ENCODE measurements at regions of chr10 and their contacts with region 1.

Region 1: GRCh38 chr10:59906417-59907202 is at the start of gene CCDC6:
- DNase-seq: peak; percentile 87 to 96 (median 94)
- ATAC-seq: peak; percentile 89
- H3K4me3 ChIP-seq: peak within 1 kb of the TSS; percentile 80 to 84
- H3K4me3 Mint-ChIP-seq: peak within 1 kb of the TSS; percentile 95
- H3K27ac ChIP-seq: peak within 1 kb of the TSS; percentile 77 to 80
- H3K27ac Mint-ChIP-seq: peak within 1 kb of the TSS; percentile 97
- H3K4me1 ChIP-seq: peaks cover 41% of the 10 kb centered on the region
- H3K4me1 Mint-ChIP-seq: peaks cover 62% of the 10 kb centered on the region
- H3K27me3 ChIP-seq: no peaks in the 10 kb centered on the region
- H3K27me3 Mint-ChIP-seq: no peaks in the 10 kb centered on the region
- CTCF ChIP-seq: peak; percentile 80
- total RNA-seq, gene CCDC6: 21.6 to 23.7 TPM

Region 2: GRCh38 chr10:59814878-59815277 is 91.7 kb before region 1 on chr10:
- CTCF ChIA-PET with region 1: no interaction called
- POLR2A ChIA-PET with region 1: no interaction called
- intact Hi-C with region 1: loop called in 1 of 2 experiments (anchors 5 kb)
- DNase-seq: no peak
- ATAC-seq: no peak
- H3K4me3 ChIP-seq: no peak overlapping the region
- H3K4me3 Mint-ChIP-seq: no peak overlapping the region
- H3K27ac ChIP-seq: no peak overlapping the region
- H3K27ac Mint-ChIP-seq: no peak overlapping the region
- H3K4me1 ChIP-seq: peaks cover 11% of the 10 kb centered on the region
- H3K4me1 Mint-ChIP-seq: peaks cover 15% of the 10 kb centered on the region
- H3K27me3 ChIP-seq: no peaks in the 10 kb centered on the region
- H3K27me3 Mint-ChIP-seq: no peaks in the 10 kb centered on the region
- CTCF ChIP-seq: no peak

Region 3: GRCh38 chr10:59830601-59831259 is 75.9 kb before region 1 on chr10:
- CTCF ChIA-PET with region 1: interaction called, 3 read pairs
- POLR2A ChIA-PET with region 1: no interaction called
- intact Hi-C with region 1: loop called (anchors 2 to 5 kb)
- DNase-seq: peak in 3 of 9 experiments; percentile 17 to 45 (median 28)
- ATAC-seq: no peak
- H3K4me3 ChIP-seq: no peak overlapping the region
- H3K4me3 Mint-ChIP-seq: no peak overlapping the region
- H3K27ac ChIP-seq: no peak overlapping the region
- H3K27ac Mint-ChIP-seq: no peak overlapping the region
- H3K4me1 ChIP-seq: no peaks in the 10 kb centered on the region
- H3K4me1 Mint-ChIP-seq: peaks cover 49% of the 10 kb centered on the region
- H3K27me3 ChIP-seq: no peaks in the 10 kb centered on the region
- H3K27me3 Mint-ChIP-seq: no peaks in the 10 kb centered on the region
- CTCF ChIP-seq: peak; percentile 50

Region 4: DNA sequence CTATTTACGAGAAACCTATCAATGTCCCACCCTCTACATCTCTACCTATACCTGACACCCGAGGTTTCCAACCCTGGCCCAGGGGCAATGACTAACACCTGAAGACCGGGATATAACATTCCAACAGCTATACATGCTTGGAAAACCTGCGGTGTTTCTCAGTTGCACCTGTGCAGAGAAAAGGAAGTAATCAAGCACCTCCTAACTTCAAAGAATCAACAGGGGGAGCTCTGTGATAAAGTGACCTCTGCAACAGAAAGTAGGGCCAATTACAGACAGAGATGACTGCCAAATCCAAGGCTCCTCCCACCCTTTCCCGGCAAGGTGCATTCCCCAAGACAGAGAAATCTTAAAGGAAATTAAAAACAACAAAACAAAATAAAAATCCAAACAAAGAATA is 41.5 kb before region 1 on chr10:
- CTCF ChIA-PET with region 1: interaction called, 16 read pairs
- POLR2A ChIA-PET with region 1: interaction called, 7 read pairs
- intact Hi-C with region 1: loop called (anchors 1 to 2 kb)
- DNase-seq: peak in 2 of 9 experiments; percentile 44 to 60
- ATAC-seq: peak; percentile 35
- H3K4me3 ChIP-seq: no peak overlapping the region
- H3K4me3 Mint-ChIP-seq: peak overlapping the region; percentile 5
- H3K27ac ChIP-seq: no peak overlapping the region
- H3K27ac Mint-ChIP-seq: peak overlapping the region; percentile 46
- H3K4me1 ChIP-seq: peaks cover 24% of the 10 kb centered on the region
- H3K4me1 Mint-ChIP-seq: peaks cover 63% of the 10 kb centered on the region
- H3K27me3 ChIP-seq: no peaks in the 10 kb centered on the region
- H3K27me3 Mint-ChIP-seq: no peaks in the 10 kb centered on the region
- CTCF ChIP-seq: peak; percentile 24

Region 5: DNA sequence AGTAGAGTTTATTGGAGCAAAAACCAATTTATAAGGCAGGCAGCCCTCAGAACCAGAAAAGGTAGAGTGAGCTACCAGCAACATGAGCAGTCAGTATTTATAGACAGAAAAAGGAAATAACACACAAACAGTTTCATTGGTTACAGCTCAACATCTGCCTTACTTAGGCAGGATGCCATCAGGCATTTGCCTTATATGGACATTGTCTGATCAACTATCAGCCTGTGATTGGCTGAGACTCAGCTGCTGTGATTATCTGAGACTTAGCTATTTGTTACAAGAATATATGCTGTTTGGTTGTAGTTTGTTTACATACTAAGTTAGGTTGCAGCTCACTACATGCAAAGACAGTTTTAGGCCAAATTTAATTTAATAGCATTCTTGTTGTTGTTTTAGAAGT is 811.2 kb after region 1 on chr10:
- CTCF ChIA-PET with region 1: no interaction called
- POLR2A ChIA-PET with region 1: no interaction called
- intact Hi-C with region 1: no loop called
- DNase-seq: no peak
- ATAC-seq: no peak
- H3K4me3 ChIP-seq: no peak overlapping the region
- H3K4me3 Mint-ChIP-seq: no peak overlapping the region
- H3K27ac ChIP-seq: no peak overlapping the region
- H3K27ac Mint-ChIP-seq: no peak overlapping the region
- H3K4me1 ChIP-seq: no peaks in the 10 kb centered on the region
- H3K4me1 Mint-ChIP-seq: peaks cover 9% of the 10 kb centered on the region
- H3K27me3 ChIP-seq: no peaks in the 10 kb centered on the region
- H3K27me3 Mint-ChIP-seq: peaks cover 2% of the 10 kb centered on the region
- CTCF ChIP-seq: no peak

Region 6: DNA sequence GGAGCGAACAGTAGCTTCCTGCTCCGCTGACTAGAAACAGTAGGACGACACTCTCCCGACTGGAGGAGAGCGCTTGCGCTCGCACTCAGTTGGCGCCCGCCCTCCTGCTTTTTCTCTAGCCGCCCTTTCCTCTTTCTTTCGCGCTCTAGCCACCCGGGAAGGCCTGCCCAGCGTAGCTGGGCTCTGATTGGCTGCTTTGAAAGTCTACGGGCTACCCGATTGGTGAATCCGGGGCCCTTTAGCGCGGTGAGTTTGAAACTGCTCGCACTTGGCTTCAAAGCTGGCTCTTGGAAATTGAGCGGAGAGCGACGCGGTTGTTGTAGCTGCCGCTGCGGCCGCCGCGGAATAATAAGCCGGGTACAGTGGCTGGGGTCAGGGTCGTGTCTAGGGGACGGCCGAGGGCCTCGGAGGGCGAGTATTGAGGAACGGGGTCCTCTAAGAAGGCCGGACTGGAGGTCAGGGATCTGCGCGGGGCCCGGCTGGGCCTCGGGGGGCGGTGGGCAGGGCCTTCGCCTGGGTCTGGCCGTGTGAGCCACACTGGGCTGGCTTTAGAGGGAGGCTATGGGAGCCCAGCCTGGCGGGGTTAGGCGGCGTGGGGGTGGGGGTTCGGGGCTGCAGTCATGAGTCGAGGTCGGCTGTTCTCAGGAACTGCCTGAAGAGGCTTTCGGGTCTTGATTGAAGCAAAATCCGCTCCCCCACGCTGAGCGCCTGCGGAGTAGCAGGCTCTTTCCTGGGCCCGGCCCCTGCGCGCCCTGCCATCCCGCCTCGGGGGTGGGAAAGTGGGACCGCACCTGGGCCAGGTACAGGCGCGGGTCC is 871.8 kb after region 1 on chr10 and contains the start of gene CDK1:
- CTCF ChIA-PET with region 1: no interaction called
- POLR2A ChIA-PET with region 1: no interaction called
- intact Hi-C with region 1: loop called (anchors 1 to 5 kb)
- DNase-seq: peak; percentile 86 to 96 (median 94)
- ATAC-seq: peak; percentile 97
- H3K4me3 ChIP-seq: peak within 1 kb of the TSS; percentile 70 to 77
- H3K4me3 Mint-ChIP-seq: peak within 1 kb of the TSS; percentile 96
- H3K27ac ChIP-seq: no peak within 1 kb of the TSS
- H3K27ac Mint-ChIP-seq: peak within 1 kb of the TSS; percentile 81
- H3K4me1 ChIP-seq: no peaks in the 10 kb centered on the region
- H3K4me1 Mint-ChIP-seq: peaks cover 13% of the 10 kb centered on the region
- H3K27me3 ChIP-seq: no peaks in the 10 kb centered on the region
- H3K27me3 Mint-ChIP-seq: peaks cover 3% of the 10 kb centered on the region
- CTCF ChIP-seq: no peak
- total RNA-seq, gene CDK1: 0.31 to 1.6 TPM

Measured in CD8-positive, alpha-beta T cell (primary cell).